Thyroid gland (tissue), 4 donors: ENCODE measurements at regions of chr5 and their contacts with region 1.

Region 1: DNA sequence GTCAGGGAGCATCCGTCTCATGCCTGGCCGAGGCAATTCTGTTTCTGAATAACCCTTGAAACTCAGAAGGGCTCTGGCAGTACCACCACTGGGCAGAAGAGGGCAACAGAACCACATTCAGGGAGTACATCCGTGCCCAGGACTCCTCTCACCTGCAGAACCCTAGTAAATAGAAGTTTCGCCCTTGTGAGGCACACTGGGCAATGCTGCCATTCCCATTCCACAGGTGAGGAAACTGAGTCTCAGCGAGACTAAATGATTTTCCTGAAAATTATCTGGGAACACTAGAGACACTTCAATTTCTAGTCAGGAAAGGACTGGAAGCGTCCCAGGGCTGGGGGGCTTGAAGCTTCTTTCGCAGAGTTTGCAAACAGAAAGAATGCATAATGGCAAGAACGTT is 74.7 kb downstream of the FGF1 start:
- DNase-seq: peak; percentile 81
- H3K4me3 ChIP-seq: no peak overlapping the region
- H3K27ac ChIP-seq: no peak overlapping the region
- H3K4me1 ChIP-seq: no peaks in the 10 kb centered on the region
- H3K27me3 ChIP-seq: no peaks in the 10 kb centered on the region
- CTCF ChIP-seq: peak; percentile 80 to 96 (median 90)
- POLR2A ChIP-seq: no peak

Region 2: DNA sequence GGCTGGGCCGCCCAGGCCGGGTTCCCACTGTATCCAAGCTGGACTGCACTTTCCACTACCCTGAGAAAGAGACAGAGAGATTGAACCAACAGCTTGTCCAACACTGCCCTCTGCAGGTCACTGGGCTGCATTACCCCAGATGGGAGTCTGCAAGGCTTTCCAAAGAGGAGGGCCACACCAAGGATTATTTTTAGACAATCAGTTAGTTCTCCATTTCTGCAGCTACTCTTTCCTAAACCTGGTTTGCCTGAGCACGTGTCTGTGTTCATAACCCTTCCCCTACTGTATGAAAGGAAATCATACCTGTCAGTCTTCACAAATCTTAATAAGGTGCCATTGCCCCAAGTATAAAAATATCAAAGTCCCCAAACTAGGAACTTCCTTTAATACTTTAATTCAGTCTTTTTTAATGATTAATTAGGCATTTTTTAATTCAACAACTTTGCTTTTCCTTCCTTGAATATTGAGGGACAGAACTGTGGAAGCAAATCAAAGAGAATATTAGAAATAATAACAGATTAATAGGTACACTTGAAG is 88.1 kb after region 1 on chr5:
- intact Hi-C with region 1: loop called (anchors 5 kb)
- DNase-seq: peak; percentile 87 to 90
- H3K4me3 ChIP-seq: no peak overlapping the region
- H3K27ac ChIP-seq: no peak overlapping the region
- H3K4me1 ChIP-seq: peaks cover 14 to 24% of the 10 kb centered on the region in 2 donors
- H3K27me3 ChIP-seq: no peaks in the 10 kb centered on the region
- CTCF ChIP-seq: peak; percentile 83 to 97 (median 96)
- POLR2A ChIP-seq: no peak